ENCODE measurements at regions of chr16 and their contacts with region 1.

Region 1: GRCh38 chr16:66552286-66553177 is at the start of gene CKLF:
- DNase-seq: peak; percentile 90
- H3K4me3 Mint-ChIP-seq: peak within 1 kb of the TSS; percentile 87
- H3K27ac Mint-ChIP-seq: peak within 1 kb of the TSS; percentile 95
- H3K4me1 Mint-ChIP-seq: peaks cover 60% of the 10 kb centered on the region
- H3K27me3 Mint-ChIP-seq: no peaks in the 10 kb centered on the region
- total RNA-seq, gene CKLF: 114 to 126 TPM

Region 2: GRCh38 chr16:66483689-66484481 is 68.6 kb before region 1 on chr16:
- CTCF ChIA-PET with region 1: interaction called, 5 read pairs
- intact Hi-C with region 1: loop called (anchors 2 kb)
- DNase-seq: peak; percentile 86
- H3K4me3 Mint-ChIP-seq: no peak overlapping the region
- H3K27ac Mint-ChIP-seq: peak overlapping the region; percentile 33
- H3K4me1 Mint-ChIP-seq: peaks cover 22% of the 10 kb centered on the region
- H3K27me3 Mint-ChIP-seq: no peaks in the 10 kb centered on the region

Region 3: DNA sequence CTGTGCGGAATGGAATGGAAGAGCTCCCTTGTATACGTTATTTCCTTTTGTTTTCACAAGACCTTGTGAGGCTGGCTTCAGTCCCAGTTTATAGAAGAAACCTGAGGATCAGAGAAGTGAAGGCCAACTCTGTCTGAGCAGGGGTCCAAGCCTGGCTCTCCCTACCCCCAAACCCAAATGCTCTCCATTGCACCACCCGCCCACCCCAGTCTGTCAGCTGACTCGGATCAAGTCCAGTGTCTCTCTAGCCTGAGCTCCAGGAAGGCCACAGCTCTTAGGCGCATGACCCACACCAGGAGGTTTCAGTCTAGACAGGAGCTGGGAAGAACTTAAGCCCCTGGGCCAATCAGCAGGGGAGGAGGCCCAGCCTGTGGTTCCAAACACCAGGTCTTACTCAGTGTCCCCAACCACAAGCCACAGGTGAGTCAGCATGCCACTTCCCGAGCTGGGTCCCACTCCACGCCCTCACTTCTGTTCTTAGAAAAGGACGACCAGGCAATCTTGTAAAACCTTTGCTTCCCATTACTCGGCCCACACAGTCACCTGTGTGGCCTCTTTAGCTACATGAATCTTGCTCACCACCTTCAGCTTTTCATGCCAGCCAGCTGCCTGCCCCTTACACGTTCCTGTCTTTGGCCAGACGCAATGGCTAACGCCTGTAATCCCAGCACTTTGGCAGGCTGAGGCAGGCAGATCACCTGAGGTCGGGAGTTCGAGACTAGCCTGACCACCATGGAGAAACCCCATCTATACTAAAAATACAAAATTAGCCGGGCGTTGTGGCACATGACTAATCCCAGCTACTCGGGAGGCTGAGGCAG is 30.4 kb before region 1 on chr16:
- CTCF ChIA-PET with region 1: interaction called, 23 read pairs
- intact Hi-C with region 1: loop called (anchors 1 kb)
- DNase-seq: peak; percentile 98
- H3K4me3 Mint-ChIP-seq: peak overlapping the region; percentile 50
- H3K27ac Mint-ChIP-seq: peak overlapping the region; percentile 89
- H3K4me1 Mint-ChIP-seq: peaks cover 72% of the 10 kb centered on the region
- H3K27me3 Mint-ChIP-seq: no peaks in the 10 kb centered on the region

Region 4: DNA sequence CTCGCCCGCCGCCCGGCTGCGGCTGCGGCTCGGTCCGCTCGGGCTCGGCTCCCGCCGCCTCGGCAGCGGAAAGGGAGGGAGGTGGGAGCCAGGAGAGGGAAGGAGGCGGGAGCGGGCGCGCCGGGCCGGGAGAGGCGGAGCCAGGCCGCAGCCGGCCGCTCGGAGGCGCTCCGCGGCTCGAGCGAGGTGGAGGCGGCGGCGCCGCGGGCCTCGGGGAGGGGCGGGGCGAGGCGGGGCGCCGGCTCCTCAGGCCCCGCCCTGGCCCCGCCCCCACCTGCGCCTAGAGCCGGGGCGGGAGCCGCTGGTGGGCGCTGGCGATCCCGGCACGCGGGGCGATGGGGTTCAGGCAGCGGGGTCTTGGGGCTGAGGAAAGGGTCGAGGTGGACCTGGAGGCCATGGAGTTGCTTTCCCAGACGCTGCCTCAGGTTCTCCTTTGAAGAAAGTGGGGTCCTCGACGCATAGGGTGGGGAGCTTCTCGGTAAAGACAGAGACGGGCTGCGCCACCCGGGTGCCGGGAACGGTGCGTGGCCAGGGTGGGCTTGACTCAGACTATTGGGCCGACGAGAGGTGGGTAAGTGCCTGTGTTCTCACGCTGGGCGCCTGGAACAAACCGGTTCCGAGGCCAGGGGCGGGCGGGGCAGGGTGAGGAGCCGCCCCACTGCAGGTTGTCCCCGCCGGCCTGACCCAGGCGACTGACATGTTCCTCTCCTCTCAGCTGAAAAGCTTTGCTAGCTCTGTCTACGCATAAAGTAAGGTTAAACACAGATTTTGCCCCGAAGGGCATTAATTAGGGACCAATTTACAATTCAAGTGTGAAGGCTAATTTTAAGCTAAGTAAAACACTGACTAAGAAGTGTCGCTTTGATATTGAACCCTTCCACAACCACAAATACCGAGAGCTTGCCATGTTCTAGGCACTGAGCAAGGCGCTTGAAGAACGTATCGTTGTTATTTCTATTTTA is 144.4 kb after region 1 on chr16 and contains the start of gene CMTM4:
- CTCF ChIA-PET with region 1: no interaction called
- intact Hi-C with region 1: loop called (anchors 5 kb)
- DNase-seq: peak; percentile 78
- H3K4me3 Mint-ChIP-seq: peak within 1 kb of the TSS; percentile 76
- H3K27ac Mint-ChIP-seq: no peak within 1 kb of the TSS
- H3K4me1 Mint-ChIP-seq: peaks cover 4% of the 10 kb centered on the region
- H3K27me3 Mint-ChIP-seq: peaks cover 6% of the 10 kb centered on the region
- total RNA-seq, gene CMTM4: 4.6 to 4.7 TPM

Measured in activated naive CD4-positive, alpha-beta T cell treated with anti-CD3 and anti-CD28 coated beads for 36 hours (primary cell).